ENCODE measurements at regions of chr1 and their contacts with region 1.

Region 1: GRCh38 chr1:161910604-161911003 is 113.1 kb downstream of the OLFML2B start:
- DNase-seq: no peak
- ATAC-seq: no peak
- H3K4me3 ChIP-seq: no peak overlapping the region
- H3K27ac ChIP-seq: no peak overlapping the region
- H3K4me1 ChIP-seq: no peaks in the 10 kb centered on the region
- H3K27me3 ChIP-seq: no peaks in the 10 kb centered on the region
- CTCF ChIP-seq: no peak
- POLR2A ChIP-seq: no peak

Region 2: GRCh38 chr1:159916184-159917051 is 1994.2 kb before region 1 on chr1:
- in situ Hi-C with region 1: no loop called
- intact Hi-C with region 1: no loop called
- DNase-seq: no peak
- ATAC-seq: no peak
- H3K4me3 ChIP-seq: no peak overlapping the region
- H3K27ac ChIP-seq: peak overlapping the region in 1 of 4 donors; percentile 18
- H3K4me1 ChIP-seq: peaks cover 15 to 32% of the 10 kb centered on the region in 2 donors
- H3K27me3 ChIP-seq: no peaks in the 10 kb centered on the region
- CTCF ChIP-seq: no peak
- POLR2A ChIP-seq: no peak

Region 3: GRCh38 chr1:161885003-161885402 is 25.6 kb before region 1 on chr1:
- in situ Hi-C with region 1: no loop called
- intact Hi-C with region 1: no loop called
- DNase-seq: no peak
- ATAC-seq: no peak
- H3K4me3 ChIP-seq: peak overlapping the region in 1 of 4 donors; percentile 1
- H3K27ac ChIP-seq: no peak overlapping the region
- H3K4me1 ChIP-seq: peaks cover 17 to 24% of the 10 kb centered on the region in 2 donors
- H3K27me3 ChIP-seq: no peaks in the 10 kb centered on the region
- CTCF ChIP-seq: no peak
- POLR2A ChIP-seq: no peak

Region 4: GRCh38 chr1:161928056-161928455 is 17.5 kb after region 1 on chr1:
- in situ Hi-C with region 1: no loop called
- intact Hi-C with region 1: loop called (anchors 2 kb)
- DNase-seq: no peak
- ATAC-seq: no peak
- H3K4me3 ChIP-seq: no peak overlapping the region
- H3K27ac ChIP-seq: no peak overlapping the region
- H3K4me1 ChIP-seq: peaks cover 14 to 24% of the 10 kb centered on the region in 2 donors
- H3K27me3 ChIP-seq: no peaks in the 10 kb centered on the region
- CTCF ChIP-seq: no peak
- POLR2A ChIP-seq: no peak